Activated CD4-positive, alpha-beta T cell treated with anti-CD3 and anti-CD28 coated beads, Interleukin-2, amount 10 ng/mL, durations not matched to agents 24 days and 14 days (primary cell): ENCODE measurements at regions of chr4 and their contacts with region 1.

Region 1: GRCh38 chr4:41990365-41991111 is at the start of gene SLC30A9:
- DNase-seq: peak; percentile 98
- H3K4me3 Mint-ChIP-seq: peak within 1 kb of the TSS; percentile 99
- H3K27ac Mint-ChIP-seq: peak within 1 kb of the TSS; percentile 94
- H3K4me1 Mint-ChIP-seq: peaks cover 22% of the 10 kb centered on the region
- H3K27me3 Mint-ChIP-seq: no peaks in the 10 kb centered on the region
- total RNA-seq, gene SLC30A9: 44.7 and 46.9 TPM in 2 replicates

Region 2: DNA sequence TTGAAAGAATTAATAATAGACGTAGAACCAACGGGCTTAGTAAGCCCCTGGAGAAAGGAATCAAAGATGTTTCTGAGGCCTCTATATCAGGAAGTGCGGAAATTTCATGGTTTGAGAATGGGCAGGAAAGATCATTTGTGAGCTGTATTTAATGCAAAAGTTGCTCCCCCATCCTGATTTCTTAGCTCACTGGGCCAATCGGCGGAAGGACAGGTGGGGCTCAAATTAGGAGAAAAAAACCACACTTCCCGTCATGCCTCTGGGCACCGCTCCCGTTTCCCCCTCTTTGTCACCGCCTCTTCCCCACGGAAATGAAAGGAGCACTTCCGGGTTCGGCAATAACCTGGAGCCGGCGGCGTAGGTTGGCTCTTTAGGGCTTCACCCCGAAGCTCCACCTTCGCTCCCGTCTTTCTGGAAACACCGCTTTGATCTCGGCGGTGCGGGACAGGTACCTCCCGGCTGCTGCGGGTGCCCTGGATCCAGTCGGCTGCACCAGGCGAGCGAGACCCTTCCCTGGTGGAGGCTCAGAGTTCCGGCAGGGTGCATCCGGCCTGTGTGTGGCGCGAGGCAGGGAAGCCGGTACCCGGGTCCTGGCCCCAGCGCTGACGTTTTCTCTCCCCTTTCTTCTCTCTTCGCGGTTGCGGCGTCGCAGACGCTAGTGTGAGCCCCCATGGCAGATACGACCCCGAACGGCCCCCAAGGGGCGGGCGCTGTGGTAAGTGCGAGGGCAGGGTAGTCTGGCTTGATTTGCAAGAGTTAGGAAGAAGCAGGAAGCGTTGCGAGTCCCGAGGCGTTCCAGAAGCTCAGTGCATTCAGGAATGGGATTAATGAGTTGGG is 55.5 kb before region 1 on chr4 and contains the start of gene TMEM33:
- intact Hi-C with region 1: loop called (anchors 1 kb)
- DNase-seq: peak; percentile 92
- H3K4me3 Mint-ChIP-seq: peak within 1 kb of the TSS; percentile 96
- H3K27ac Mint-ChIP-seq: peak within 1 kb of the TSS; percentile 96
- H3K4me1 Mint-ChIP-seq: peaks cover 36% of the 10 kb centered on the region
- H3K27me3 Mint-ChIP-seq: no peaks in the 10 kb centered on the region
- total RNA-seq, gene TMEM33: 97.6 and 102 TPM in 2 replicates